ENCODE measurements at regions of chr1 and their contacts with region 1.

Region 1: GRCh38 chr1:15355968-15356621 is 53.6 kb upstream of the EFHD2 start:
- DNase-seq: no peak
- H3K4me3 Mint-ChIP-seq: no peak overlapping the region
- H3K27ac Mint-ChIP-seq: no peak overlapping the region
- H3K4me1 Mint-ChIP-seq: peaks cover 34% of the 10 kb centered on the region
- H3K27me3 Mint-ChIP-seq: peaks cover 17% of the 10 kb centered on the region

Region 2: DNA sequence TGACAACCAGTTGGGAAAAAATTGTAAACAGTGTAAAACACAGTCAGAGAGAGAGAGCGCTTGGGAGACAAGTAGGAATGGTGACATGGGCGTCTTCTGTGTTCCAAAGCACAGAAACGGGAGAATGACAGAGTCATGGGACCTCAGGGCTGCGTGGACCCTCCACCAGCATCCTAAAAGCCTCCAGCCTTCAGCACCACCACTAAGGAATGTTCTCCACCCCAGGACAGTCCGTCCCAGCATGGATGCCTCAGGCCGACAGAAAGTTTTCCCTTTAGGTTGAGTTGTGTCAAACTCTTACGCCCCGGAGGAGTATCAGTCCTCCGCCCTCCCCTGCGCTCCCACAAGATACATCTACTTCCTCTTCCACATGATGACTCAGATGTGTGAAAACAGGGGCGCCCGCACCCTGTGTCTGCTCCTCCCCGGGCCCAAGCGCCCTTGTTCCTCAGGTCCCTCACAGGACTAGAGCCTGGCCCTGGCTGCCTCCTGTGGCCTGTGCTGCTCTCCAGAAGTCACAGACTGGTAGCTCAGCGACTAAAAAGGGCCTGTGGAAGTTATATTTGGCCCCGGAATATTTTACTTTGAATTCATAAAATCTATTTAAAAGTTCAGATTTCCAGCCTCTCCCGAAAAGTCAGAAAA is 10.3 kb before region 1 on chr1:
- intact Hi-C with region 1: loop called (anchors 1 kb)
- DNase-seq: peak; percentile 90
- H3K4me3 Mint-ChIP-seq: peak overlapping the region; percentile 60
- H3K27ac Mint-ChIP-seq: peak overlapping the region; percentile 79
- H3K4me1 Mint-ChIP-seq: peaks cover 69% of the 10 kb centered on the region
- H3K27me3 Mint-ChIP-seq: peaks cover 8% of the 10 kb centered on the region

Measured in activated CD4-positive, alpha-beta T cell treated with anti-CD3 and anti-CD28 coated beads, Interleukin-2, amount 10 ng/mL, durations not matched to agents 24 days and 14 days (primary cell).